Mammary epithelial cell (primary cell): ENCODE measurements at regions of chr11 and their contacts with region 1.

Region 1: GRCh38 chr11:85685820-85686459 is at the start of gene CCDC89:
- DNase-seq: no peak
- H3K4me3 ChIP-seq: no peak within 1 kb of the TSS
- H3K27ac ChIP-seq: no peak within 1 kb of the TSS
- H3K4me1 ChIP-seq: no peaks in the 10 kb centered on the region
- H3K27me3 ChIP-seq: no peaks in the 10 kb centered on the region
- CTCF ChIP-seq: no peak
- total RNA-seq, gene CCDC89: 0.56 to 2.0 TPM

Region 2: GRCh38 chr11:85759915-85760314 is 74.0 kb after region 1 on chr11:
- CTCF ChIA-PET with region 1: no interaction called
- dilution Hi-C with region 1: loop called (anchors 5 kb)
- in situ Hi-C with region 1: no loop called
- intact Hi-C with region 1: no loop called
- DNase-seq: peak; percentile 78
- H3K4me3 ChIP-seq: no peak overlapping the region
- H3K27ac ChIP-seq: no peak overlapping the region
- H3K4me1 ChIP-seq: peaks cover 16% of the 10 kb centered on the region
- H3K27me3 ChIP-seq: no peaks in the 10 kb centered on the region
- CTCF ChIP-seq: no peak